Aorta (tissue), 5 donors: ENCODE measurements at regions of chrX and their contacts with region 1.

Region 1: GRCh38 chrX:13487731-13488523 is 81.5 kb upstream of the EGFL6 start:
- DNase-seq: no peak
- ATAC-seq: peak; percentile 77
- H3K4me3 ChIP-seq: no peak overlapping the region
- H3K27ac ChIP-seq: peak overlapping the region; percentile 80 to 92
- H3K4me1 ChIP-seq: no peaks in the 10 kb centered on the region
- H3K27me3 ChIP-seq: no peaks in the 10 kb centered on the region

Region 2: DNA sequence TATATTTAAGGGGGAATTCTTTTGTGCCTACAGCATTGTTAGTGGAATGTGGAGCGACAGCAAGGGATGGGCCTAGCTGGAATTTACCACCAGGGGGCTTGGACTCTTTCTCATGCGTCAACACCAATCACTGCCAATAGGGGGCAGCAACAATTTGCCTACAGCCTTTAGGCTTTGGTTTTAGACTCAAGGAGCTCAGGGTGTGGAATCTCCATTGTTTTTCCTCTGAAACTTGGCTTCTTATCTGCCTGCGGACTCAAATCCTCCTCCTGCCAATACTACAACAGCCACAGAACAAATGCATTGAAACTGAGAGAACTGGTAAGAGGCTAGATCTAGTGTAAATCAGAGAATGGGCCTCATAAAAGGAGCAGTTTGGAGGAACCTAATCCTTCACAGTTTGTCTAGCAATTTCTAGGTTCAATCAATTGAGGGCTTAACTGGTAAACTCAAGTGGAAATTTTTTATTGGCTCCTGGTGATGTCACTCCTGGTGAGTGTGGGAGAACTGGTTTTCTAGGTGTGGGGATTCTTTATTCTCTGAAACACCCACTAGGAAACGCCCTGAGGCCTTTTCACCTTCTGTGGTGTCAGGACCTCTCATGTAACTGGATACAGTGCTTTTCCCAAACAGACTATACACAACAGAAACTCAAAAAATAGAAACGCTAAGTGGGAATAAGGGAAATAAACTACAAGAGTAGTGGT is 540.9 kb before region 1 on chrX:
- intact Hi-C with region 1: loop called in 1 of 2 experiments (anchors 5 kb)
- DNase-seq: peak in 1 of 2 donors; percentile 75
- ATAC-seq: peak; percentile 89
- H3K4me3 ChIP-seq: no peak overlapping the region
- H3K27ac ChIP-seq: no peak overlapping the region
- H3K4me1 ChIP-seq: no peaks in the 10 kb centered on the region
- H3K27me3 ChIP-seq: no peaks in the 10 kb centered on the region

Region 3: DNA sequence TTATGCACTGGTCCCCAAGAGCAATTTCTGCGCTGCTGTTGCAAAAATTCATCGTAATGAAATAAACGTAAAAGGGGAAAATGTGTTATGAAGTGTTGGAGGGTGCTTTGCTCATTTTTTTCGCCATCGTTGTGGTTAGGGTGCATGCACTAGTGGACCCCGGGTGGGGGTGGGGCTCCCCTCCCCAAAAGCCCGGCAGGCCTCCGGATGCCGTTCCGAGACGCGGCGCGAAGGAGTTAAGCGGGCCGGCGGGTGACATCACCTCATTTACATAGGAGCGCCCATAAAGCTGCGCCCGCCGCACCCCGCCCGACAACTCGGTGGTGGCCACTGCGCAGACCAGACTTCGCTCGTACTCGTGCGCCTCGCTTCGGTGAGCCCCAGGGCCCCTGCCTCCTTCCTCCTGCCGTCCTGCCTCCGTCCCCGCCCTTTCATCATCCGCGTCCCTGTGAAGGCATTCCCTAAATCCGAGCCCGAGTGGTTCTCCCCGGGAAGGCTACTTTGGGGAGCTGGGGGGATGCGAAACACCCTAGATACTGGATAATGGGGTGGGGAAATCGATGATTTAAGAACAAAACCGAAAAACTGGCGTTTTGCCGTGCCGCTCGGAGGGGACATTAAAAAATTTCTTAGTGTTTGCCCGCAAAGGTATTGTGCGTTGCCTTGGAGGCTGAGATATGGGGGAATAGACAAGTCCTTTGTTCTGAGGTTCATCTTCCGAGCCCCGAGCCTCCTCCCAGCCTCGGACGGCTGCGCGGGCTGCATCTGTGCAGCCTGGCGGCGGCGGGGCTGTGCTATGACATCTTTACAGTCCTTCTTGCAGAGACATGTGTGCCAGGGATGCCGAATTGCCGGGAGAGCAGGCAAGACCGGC is 512.9 kb before region 1 on chrX and contains the start of gene TMSB4X:
- intact Hi-C with region 1: loop called (anchors 2 to 5 kb)
- DNase-seq: peak; percentile 91 to 95
- ATAC-seq: peak; percentile 91
- H3K4me3 ChIP-seq: peak within 1 kb of the TSS; percentile 66 to 94
- H3K27ac ChIP-seq: peak within 1 kb of the TSS; percentile 57 to 99
- H3K4me1 ChIP-seq: peaks cover 0 to 2% of the 10 kb centered on the region in 2 donors
- H3K27me3 ChIP-seq: no peaks in the 10 kb centered on the region
- total RNA-seq, gene TMSB4X: 2,762 to 3,390 TPM

Region 4: DNA sequence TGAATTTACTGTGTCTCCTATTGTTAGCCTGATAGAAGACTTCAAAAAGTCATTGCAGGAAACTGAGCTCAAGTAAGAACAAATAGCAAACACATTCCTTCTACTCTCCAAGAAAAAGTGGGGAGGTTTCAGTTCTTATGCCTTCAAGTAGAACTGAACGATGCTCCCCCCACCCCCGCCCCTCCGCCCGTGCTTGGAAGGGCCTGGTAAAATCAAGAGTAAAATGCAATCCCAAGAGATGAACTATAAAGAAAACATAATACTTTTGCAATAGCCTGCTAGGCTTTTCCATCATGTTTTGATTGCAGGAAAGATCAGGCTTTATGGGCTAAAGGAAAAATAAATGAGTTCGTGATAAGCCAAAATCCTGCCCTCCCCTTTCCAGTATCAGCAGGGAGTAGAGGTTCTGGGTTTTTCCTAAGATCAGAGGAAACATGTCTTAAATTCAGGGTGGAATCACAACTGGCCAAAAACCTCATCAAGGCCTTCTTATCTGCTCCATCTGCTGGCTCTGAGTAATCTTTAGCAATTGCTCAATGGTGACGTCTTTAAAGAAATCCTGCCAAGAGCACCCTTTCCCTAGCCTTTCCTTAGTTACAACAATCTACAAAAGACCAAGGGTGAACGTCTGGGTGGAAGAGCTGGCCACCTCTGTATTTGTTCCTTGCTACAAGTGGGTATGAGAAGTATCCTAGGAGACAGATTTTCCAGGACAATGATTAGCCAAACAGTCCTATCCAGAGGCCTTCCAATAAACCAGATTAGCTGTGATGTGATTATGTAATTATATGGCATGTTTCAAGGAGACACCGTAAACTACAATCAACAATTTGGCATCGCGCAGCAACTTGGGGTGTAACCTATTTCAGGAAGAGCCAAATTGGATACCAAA is 377.2 kb before region 1 on chrX:
- intact Hi-C with region 1: loop called in 1 of 2 experiments (anchors 10 kb)
- DNase-seq: no peak
- ATAC-seq: peak; percentile 87
- H3K4me3 ChIP-seq: no peak overlapping the region
- H3K27ac ChIP-seq: peak overlapping the region; percentile 28 to 33
- H3K4me1 ChIP-seq: peaks cover 0 to 2% of the 10 kb centered on the region in 2 donors
- H3K27me3 ChIP-seq: no peaks in the 10 kb centered on the region

Region 5: DNA sequence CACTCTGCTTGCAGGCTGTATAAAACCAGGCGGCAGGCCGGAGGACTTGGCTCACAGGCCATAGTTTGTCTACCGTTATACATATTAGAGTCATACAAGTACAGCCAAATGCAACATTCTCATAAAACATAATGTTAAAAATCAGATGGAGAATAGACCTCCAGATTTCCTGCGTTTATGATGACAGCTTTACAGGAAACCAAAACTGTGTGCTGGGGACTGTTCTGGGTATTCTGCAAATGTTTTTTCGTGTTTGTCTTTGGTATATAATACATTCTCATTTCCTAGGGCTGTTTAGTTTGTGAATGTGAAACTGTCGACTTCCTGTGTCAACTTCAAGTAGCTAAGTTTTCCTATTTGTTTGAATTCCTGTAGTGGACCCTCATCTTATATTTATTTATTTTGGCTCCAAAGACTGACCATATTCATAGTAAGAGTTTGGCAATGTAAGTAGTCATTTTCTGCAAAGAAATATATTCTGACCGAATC is 364.0 kb before region 1 on chrX:
- intact Hi-C with region 1: loop called (anchors 10 kb)
- DNase-seq: no peak
- ATAC-seq: no peak
- H3K4me3 ChIP-seq: no peak overlapping the region
- H3K27ac ChIP-seq: no peak overlapping the region
- H3K4me1 ChIP-seq: peaks cover 0 to 3% of the 10 kb centered on the region in 2 donors
- H3K27me3 ChIP-seq: no peaks in the 10 kb centered on the region

Region 6: GRCh38 chrX:13223868-13224555 is 263.9 kb before region 1 on chrX:
- intact Hi-C with region 1: loop called in 1 of 2 experiments (anchors 5 kb)
- DNase-seq: no peak
- ATAC-seq: peak; percentile 54
- H3K4me3 ChIP-seq: no peak overlapping the region
- H3K27ac ChIP-seq: no peak overlapping the region
- H3K4me1 ChIP-seq: no peaks in the 10 kb centered on the region
- H3K27me3 ChIP-seq: no peaks in the 10 kb centered on the region

Region 7: GRCh38 chrX:13432414-13433297 is 55.3 kb before region 1 on chrX:
- intact Hi-C with region 1: loop called in 1 of 2 experiments (anchors 5 kb)
- DNase-seq: peak in 1 of 2 donors; percentile 51
- ATAC-seq: peak; percentile 83
- H3K4me3 ChIP-seq: no peak overlapping the region
- H3K27ac ChIP-seq: peak overlapping the region in 1 of 2 donors; percentile 18
- H3K4me1 ChIP-seq: no peaks in the 10 kb centered on the region
- H3K27me3 ChIP-seq: no peaks in the 10 kb centered on the region